BJ (cell line): ENCODE measurements at regions of chr13 and their contacts with region 1.

Region 1: GRCh38 chr13:50081679-50082425 is 66.6 kb downstream of the KCNRG start:
- DNase-seq: peak; percentile 97
- H3K4me3 ChIP-seq: peak overlapping the region; percentile 95
- H3K27me3 ChIP-seq: no peaks in the 10 kb centered on the region
- CTCF ChIP-seq: no peak

Region 2: DNA sequence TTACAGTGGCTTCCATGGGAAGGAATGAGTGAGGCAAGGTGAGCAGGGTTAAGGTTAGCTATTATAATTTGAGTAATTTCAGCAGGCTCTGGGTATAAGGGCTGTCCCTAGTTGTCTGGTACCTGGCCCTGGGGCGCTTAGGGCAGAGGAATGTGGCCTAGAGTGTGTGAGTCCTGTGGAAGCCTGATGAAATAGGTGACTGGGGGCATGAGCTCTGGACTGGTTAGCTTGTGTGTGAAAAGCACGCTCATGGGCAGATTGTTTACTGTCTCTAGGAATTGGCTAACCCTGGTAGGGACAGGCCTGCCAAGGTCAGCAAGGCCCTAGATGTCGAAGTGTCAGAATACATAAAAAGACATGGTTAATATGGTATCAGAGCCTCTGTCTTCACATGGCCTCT is 188.3 kb before region 1 on chr13:
- CTCF ChIA-PET with region 1: no interaction called
- POLR2A ChIA-PET with region 1: no interaction called
- DNase-seq: no peak
- H3K4me3 ChIP-seq: no peak overlapping the region
- H3K27me3 ChIP-seq: no peaks in the 10 kb centered on the region
- CTCF ChIP-seq: no peak

Region 3: DNA sequence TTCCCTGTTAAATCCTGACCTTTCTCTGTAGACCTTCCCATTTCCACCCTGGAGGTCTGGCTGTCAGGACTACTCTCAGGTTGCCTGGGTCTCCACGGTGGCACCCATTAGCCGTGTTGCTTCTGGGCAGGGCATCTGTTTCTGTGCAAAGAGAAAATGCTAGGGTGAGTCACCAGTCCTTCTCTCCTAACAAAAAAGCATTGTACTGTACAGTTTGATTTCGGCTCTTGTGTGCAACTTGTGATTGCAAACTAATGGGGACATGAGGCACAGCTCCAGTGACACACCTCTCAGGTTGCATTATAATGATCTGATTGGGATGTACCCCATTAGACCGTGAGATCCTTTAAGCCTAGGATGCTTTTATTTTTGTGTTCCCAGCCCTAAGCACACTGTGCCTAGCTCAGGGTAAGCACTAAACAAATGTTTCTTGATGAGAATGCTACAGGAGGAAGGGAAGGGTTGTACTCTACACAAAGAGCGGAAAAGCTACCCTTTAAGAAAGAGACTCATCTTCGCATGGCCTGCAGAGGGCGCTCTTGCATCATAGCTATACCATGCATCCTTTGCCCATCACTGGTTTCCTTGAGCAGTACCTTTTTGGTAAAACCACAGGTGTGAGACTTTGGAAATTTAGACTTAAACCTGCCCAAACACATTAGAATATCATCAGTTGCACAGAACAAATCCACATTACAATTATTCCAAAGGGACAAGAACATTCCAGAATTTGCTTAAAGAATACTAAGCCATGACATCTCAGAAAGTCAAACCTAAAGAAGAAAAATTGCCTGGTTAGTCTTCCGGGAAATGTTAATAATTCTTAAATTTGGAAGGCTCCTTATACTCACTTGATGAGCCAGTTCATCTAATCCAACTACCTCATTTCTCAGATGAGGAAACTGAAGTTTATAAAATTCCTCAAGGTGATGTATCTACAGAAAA is 105.3 kb before region 1 on chr13:
- CTCF ChIA-PET with region 1: interaction called, 16 read pairs
- POLR2A ChIA-PET with region 1: no interaction called
- DNase-seq: no peak
- H3K4me3 ChIP-seq: no peak overlapping the region
- H3K27me3 ChIP-seq: no peaks in the 10 kb centered on the region
- CTCF ChIP-seq: peak; percentile 88

Region 4: DNA sequence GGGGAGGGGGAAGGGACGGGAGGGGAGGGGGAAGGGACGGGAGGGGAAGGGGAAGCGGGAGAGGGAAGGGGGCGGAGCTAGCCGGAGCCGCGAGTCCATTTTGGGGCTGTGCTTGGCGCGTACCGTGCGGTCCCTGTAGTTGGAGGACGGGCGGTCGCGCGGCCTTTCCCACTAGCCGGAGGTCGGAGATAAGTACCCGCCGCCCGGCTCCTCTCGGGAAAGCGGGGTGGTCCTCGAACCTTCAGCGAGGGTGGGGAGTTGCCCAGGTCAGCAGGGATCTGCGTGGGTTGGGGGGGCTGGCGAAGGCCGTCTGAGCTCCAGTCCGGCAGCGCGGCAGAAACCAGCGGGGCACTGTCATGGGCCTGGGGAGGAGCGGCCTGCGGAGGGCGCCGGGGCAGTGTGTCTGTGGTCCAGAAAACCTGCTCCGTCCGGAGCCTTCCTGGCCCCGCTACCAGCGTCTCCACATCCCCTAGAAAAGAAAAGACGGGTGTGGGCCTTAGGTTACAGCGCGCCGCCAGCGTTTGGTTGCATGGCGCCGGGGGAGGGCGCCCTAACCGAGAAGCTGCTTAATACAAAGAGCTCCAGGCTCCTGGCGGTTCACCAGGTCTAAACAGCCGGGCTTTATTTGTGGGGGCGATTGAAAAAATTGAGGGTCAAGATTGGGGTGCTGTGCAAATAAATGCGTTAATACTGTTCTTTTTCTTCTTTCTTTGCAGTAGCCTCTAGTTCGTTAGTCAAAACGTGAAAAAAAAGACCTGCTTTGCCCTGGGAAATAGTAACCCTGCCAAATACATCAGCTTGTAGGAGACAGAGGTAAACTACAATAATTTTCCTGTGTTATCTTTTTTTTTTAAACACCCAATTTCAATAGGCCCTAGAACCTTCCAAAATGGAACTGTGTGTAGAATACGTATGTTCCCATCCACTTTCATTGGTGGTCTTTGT is 84.6 kb before region 1 on chr13 and contains the start of gene TRIM13:
- CTCF ChIA-PET with region 1: interaction called, 29 read pairs
- POLR2A ChIA-PET with region 1: interaction called, 4 read pairs
- DNase-seq: no peak
- H3K4me3 ChIP-seq: peak within 1 kb of the TSS; percentile 84
- H3K27me3 ChIP-seq: no peaks in the 10 kb centered on the region
- CTCF ChIP-seq: peak; percentile 89
- polyA plus RNA-seq, gene TRIM13: 11.7 and 22.9 TPM in 2 replicates

Region 5: GRCh38 chr13:50123862-50124536 is 42.1 kb after region 1 on chr13:
- CTCF ChIA-PET with region 1: interaction called, 11 read pairs
- POLR2A ChIA-PET with region 1: interaction called, 3 read pairs
- DNase-seq: peak; percentile 37
- H3K4me3 ChIP-seq: peak overlapping the region; percentile 68
- H3K27me3 ChIP-seq: peaks cover 4% of the 10 kb centered on the region
- CTCF ChIP-seq: peak; percentile 13; the same call in 1 of the 2 replicates